ENCODE measurements at regions of chr15 and their contacts with region 1.

Region 1: GRCh38 chr15:73908030-73908821 is 18.0 kb upstream of the LOXL1 start:
- DNase-seq: peak; percentile 95
- H3K4me3 ChIP-seq: no peak overlapping the region
- H3K27ac ChIP-seq: no peak overlapping the region
- H3K4me1 ChIP-seq: peaks cover 0 to 8% (median 4%) of the 10 kb centered on the region in 4 donors
- H3K27me3 ChIP-seq: no peaks in the 10 kb centered on the region
- CTCF ChIP-seq: peak in 2 of 3 experiments; percentile 87 to 91
- EP300 ChIP-seq: no peak
- POLR2A ChIP-seq: no peak

Region 2: GRCh38 chr15:73753250-73754130 is 154.7 kb before region 1 on chr15 and contains the start of gene INSYN1:
- intact Hi-C with region 1: loop called (anchors 10 kb)
- DNase-seq: no peak
- H3K4me3 ChIP-seq: peak within 1 kb of the TSS; percentile 77 to 88 (median 85)
- H3K27ac ChIP-seq: peak within 1 kb of the TSS; percentile 34 to 81 (median 78)
- H3K4me1 ChIP-seq: peaks cover 17 to 50% (median 41%) of the 10 kb centered on the region in 4 donors
- H3K27me3 ChIP-seq: peaks cover 0 to 18% (median 3%) of the 10 kb centered on the region in 4 donors
- CTCF ChIP-seq: no peak
- EP300 ChIP-seq: no peak
- POLR2A ChIP-seq: no peak
- total RNA-seq, gene INSYN1: 12.5 to 27.4 (median 23.8) TPM

Region 3: GRCh38 chr15:73873889-73874511 is 34.2 kb before region 1 on chr15:
- intact Hi-C with region 1: loop called (anchors 2 kb)
- DNase-seq: no peak
- H3K4me3 ChIP-seq: no peak overlapping the region
- H3K27ac ChIP-seq: no peak overlapping the region
- H3K4me1 ChIP-seq: peaks cover 0 to 6% (median 3%) of the 10 kb centered on the region in 4 donors
- H3K27me3 ChIP-seq: peaks cover 0 to 29% (median 0%) of the 10 kb centered on the region in 4 donors
- CTCF ChIP-seq: peak; percentile 64 to 66 (median 65)
- EP300 ChIP-seq: no peak
- POLR2A ChIP-seq: no peak

Region 4: DNA sequence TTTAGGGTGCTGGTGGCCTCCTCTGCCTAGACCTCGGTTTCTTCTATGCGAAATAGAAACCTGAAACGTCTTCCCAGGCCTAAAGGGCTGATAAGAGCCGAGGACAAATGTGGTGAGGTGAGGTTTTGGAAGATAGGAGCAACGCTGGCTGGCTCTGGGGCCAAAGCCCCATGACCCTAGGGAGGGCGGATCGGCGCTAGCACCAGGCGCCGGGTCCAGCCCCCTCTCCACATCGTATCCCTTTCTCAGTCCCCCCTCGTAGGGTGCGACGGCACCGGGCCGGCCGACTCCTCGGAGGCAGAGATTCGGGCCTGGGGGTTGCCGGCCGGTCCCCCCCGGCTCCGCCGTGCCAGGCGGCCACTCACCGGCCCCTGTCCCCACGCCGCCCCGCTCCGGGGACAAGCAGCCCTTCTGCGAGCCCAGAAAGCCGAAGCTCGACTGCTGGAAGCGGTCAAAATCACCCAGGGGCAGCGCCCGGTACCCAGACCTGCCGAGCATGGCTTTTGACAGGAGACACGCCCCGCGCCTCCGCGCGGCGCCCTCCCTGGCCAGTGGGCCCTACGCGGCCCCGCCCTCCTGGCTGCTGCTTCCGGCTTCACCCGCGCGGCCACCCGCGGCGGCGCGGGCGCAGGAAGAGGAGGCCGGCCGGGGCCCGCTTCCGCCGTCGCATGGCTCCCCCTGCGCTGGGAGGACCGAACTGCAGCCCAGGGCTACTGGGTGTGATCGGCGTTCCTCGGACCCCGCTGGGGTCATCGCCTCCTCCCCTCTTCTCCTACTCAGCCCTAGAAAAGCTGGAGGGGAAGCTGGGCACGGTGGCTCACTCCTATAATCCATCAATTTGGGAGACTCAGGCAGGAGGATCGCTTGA is 83.7 kb after region 1 on chr15 and contains the start of gene STOML1:
- intact Hi-C with region 1: no loop called
- DNase-seq: peak; percentile 95
- H3K4me3 ChIP-seq: peak within 1 kb of the TSS; percentile 76 to 91 (median 86)
- H3K27ac ChIP-seq: peak within 1 kb of the TSS; percentile 81 to 97 (median 85)
- H3K4me1 ChIP-seq: peaks cover 80 to 92% (median 89%) of the 10 kb centered on the region in 4 donors
- H3K27me3 ChIP-seq: no peaks in the 10 kb centered on the region
- CTCF ChIP-seq: peak in 2 of 3 experiments; percentile 97 to 98
- EP300 ChIP-seq: no peak
- POLR2A ChIP-seq: peak; percentile 20
- total RNA-seq, gene STOML1: 7.9 to 25.4 (median 14.9) TPM